ENCODE measurements at regions of chr7 and their contacts with region 1.

Region 1: GRCh38 chr7:40845943-40846342 is 711.1 kb downstream of the SUGCT start:
- DNase-seq: no peak
- ATAC-seq: no peak
- H3K4me3 ChIP-seq: no peak overlapping the region
- H3K4me3 Mint-ChIP-seq: no peak overlapping the region
- H3K27ac ChIP-seq: no peak overlapping the region
- H3K27ac Mint-ChIP-seq: no peak overlapping the region
- H3K4me1 ChIP-seq: no peaks in the 10 kb centered on the region
- H3K4me1 Mint-ChIP-seq: no peaks in the 10 kb centered on the region
- H3K27me3 ChIP-seq: no peaks in the 10 kb centered on the region
- H3K27me3 Mint-ChIP-seq: no peaks in the 10 kb centered on the region

Region 2: GRCh38 chr7:40077849-40078248 is 768.1 kb before region 1 on chr7:
- CTCF ChIA-PET with region 1: no interaction called
- POLR2A ChIA-PET with region 1: no interaction called
- intact Hi-C with region 1: no loop called
- DNase-seq: no peak
- ATAC-seq: no peak
- H3K4me3 ChIP-seq: no peak overlapping the region
- H3K4me3 Mint-ChIP-seq: no peak overlapping the region
- H3K27ac ChIP-seq: no peak overlapping the region
- H3K27ac Mint-ChIP-seq: no peak overlapping the region
- H3K4me1 ChIP-seq: peaks cover 0 to 3% of the 10 kb centered on the region in 2 donors
- H3K4me1 Mint-ChIP-seq: peaks cover 0 to 4% (median 0%) of the 10 kb centered on the region in 7 donors
- H3K27me3 ChIP-seq: no peaks in the 10 kb centered on the region
- H3K27me3 Mint-ChIP-seq: no peaks in the 10 kb centered on the region

Region 3: GRCh38 chr7:40859965-40860543 is 14.1 kb after region 1 on chr7:
- CTCF ChIA-PET with region 1: no interaction called
- POLR2A ChIA-PET with region 1: no interaction called
- intact Hi-C with region 1: loop called in 1 of 2 experiments (anchors 1 kb)
- DNase-seq: no peak
- ATAC-seq: no peak
- H3K4me3 ChIP-seq: no peak overlapping the region
- H3K4me3 Mint-ChIP-seq: no peak overlapping the region
- H3K27ac ChIP-seq: no peak overlapping the region
- H3K27ac Mint-ChIP-seq: no peak overlapping the region
- H3K4me1 ChIP-seq: no peaks in the 10 kb centered on the region
- H3K4me1 Mint-ChIP-seq: no peaks in the 10 kb centered on the region
- H3K27me3 ChIP-seq: no peaks in the 10 kb centered on the region
- H3K27me3 Mint-ChIP-seq: no peaks in the 10 kb centered on the region